ENCODE measurements at regions of chr15 and their contacts with region 1.

Region 1: GRCh38 chr15:32029862-32030781 is at the start of gene CHRNA7:
- DNase-seq: peak; percentile 63 to 64
- ATAC-seq: peak; percentile 96 to 97
- H3K4me3 ChIP-seq: peak within 1 kb of the TSS; percentile 85
- H3K27ac ChIP-seq: peak within 1 kb of the TSS; percentile 75 to 86
- H3K4me1 ChIP-seq: peaks cover 9% of the 10 kb centered on the region; the same call in 1 of the 3 replicates
- CTCF ChIP-seq: no peak
- EP300 ChIP-seq: no peak
- POLR2A ChIP-seq: peak; percentile 88
- RAD21 ChIP-seq: no peak
- polyA plus RNA-seq, gene CHRNA7: 1.4 and 1.8 TPM in 2 replicates

Region 2: GRCh38 chr15:31930967-31931366 is 99.2 kb before region 1 on chr15:
- CTCF ChIA-PET with region 1: no interaction called
- POLR2A ChIA-PET with region 1: no interaction called
- DNase-seq: no peak
- ATAC-seq: no peak; a peak in 1 of 6 replicates
- H3K4me3 ChIP-seq: no peak overlapping the region
- H3K27ac ChIP-seq: no peak overlapping the region
- H3K4me1 ChIP-seq: 0 out of 3 replicates have a peak, but pooled peaks cover 3% of the 10 kb centered on the region
- CTCF ChIP-seq: no peak
- EP300 ChIP-seq: no peak
- POLR2A ChIP-seq: no peak
- RAD21 ChIP-seq: no peak

Region 3: DNA sequence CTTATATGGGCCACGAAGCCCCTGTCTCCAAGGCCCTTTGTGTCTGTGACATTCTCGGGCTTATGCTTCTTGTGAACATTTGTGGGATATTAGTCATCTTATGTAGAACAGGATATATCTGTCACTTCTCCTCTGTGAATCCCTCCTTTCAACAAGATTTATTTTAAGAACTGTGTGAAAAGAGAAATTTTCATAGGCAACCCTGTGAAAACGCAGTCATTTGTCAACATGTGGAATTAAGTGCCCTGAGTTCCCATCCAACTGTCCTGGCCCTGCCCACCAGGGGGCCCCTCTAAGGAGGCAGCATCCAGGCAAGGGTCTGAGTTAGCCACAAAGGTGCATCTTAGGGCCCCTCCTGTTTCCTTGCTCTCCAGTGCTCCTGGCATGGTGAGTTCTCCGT is 76.6 kb before region 1 on chr15:
- CTCF ChIA-PET with region 1: no interaction called
- POLR2A ChIA-PET with region 1: no interaction called
- DNase-seq: no peak
- ATAC-seq: no peak
- H3K4me3 ChIP-seq: no peak overlapping the region
- H3K27ac ChIP-seq: no peak overlapping the region
- H3K4me1 ChIP-seq: no peaks in the 10 kb centered on the region
- CTCF ChIP-seq: no peak
- EP300 ChIP-seq: no peak
- POLR2A ChIP-seq: no peak
- RAD21 ChIP-seq: no peak

Region 4: DNA sequence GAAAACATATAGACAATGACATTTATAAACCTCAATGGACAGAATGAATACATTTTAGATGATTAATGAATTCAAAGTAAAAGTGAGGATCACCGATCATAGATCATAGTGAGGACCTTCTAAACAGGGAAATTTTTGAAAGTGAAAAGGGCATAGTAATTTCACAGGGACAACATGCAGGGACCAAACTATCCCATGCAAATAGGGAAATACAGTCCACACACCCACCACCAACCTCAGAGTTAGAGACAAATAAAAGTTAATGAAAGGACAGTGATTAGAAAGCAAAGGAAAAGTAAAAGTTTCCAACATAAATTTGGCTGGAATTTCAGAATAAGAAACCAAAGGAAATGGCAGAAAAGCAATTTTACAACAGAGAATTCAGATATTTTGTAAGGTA is 15.2 kb before region 1 on chr15:
- CTCF ChIA-PET with region 1: interaction called, 13 read pairs
- POLR2A ChIA-PET with region 1: no interaction called
- DNase-seq: no peak
- ATAC-seq: no peak
- H3K4me3 ChIP-seq: no peak overlapping the region
- H3K27ac ChIP-seq: no peak overlapping the region
- H3K4me1 ChIP-seq: no peaks in the 10 kb centered on the region
- CTCF ChIP-seq: no peak
- EP300 ChIP-seq: no peak
- POLR2A ChIP-seq: no peak
- RAD21 ChIP-seq: no peak

Region 5: GRCh38 chr15:32104061-32104995 is 74.2 kb after region 1 on chr15:
- CTCF ChIA-PET with region 1: no interaction called
- POLR2A ChIA-PET with region 1: no interaction called
- DNase-seq: no peak
- ATAC-seq: peak; percentile 61; a peak in 4 of 6 replicates
- H3K4me3 ChIP-seq: no peak overlapping the region
- H3K27ac ChIP-seq: no peak overlapping the region
- H3K4me1 ChIP-seq: no peaks in the 10 kb centered on the region
- CTCF ChIP-seq: no peak
- EP300 ChIP-seq: no peak
- POLR2A ChIP-seq: no peak
- RAD21 ChIP-seq: peak in 1 of 2 experiments; percentile 26; a peak in 2 of 5 replicates